Endothelial cell of umbilical vein (primary cell): ENCODE measurements at regions of chr1 and their contacts with region 1.

Region 1: GRCh38 chr1:155017041-155017945 is 14.7 kb downstream of the ZBTB7B start:
- DNase-seq: peak; percentile 95
- H3K4me3 ChIP-seq: peak overlapping the region in 1 of 3 experiments; percentile 39
- H3K27ac ChIP-seq: peak overlapping the region; percentile 36
- H3K4me1 ChIP-seq: peaks cover 9% of the 10 kb centered on the region
- H3K27me3 ChIP-seq: no peaks in the 10 kb centered on the region
- CTCF ChIP-seq: peak; percentile 100
- POLR2A ChIP-seq: peak; percentile 57

Region 2: DNA sequence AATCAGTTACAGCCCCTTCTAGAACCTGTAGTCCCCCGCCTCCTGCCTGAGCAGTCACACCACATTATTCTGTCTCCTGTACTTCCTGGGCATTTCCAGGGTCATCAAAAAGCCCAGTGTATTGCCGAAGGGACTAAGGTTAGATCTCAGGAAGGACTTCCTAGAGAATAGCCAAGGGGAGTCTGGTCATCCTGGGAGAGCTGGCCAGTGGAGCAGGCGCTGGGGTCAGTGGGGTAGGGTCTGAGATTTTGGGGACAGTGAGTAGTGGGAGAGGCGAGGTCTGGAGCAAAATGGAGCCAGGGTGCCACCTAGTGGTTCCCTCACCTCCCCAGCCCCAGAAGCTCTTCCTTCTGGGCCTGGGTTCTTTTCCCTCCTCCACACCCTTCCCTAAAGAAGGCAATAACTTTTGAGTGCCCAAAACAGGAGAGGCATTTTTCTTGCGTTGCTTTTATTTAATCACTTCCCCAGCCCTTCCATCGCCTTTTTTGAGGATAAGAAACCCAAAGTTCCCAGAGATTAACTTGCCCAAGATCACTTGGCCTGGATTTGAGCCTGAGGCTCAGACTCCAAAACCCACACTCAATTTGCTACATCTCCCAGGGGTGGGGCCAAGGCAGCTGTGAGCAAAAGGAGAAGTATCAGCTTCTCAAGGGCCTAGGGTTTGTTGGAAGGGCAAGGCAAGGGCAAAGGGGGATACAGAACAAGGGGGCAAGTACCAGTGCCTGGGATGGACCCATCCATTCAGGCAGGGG is 73.5 kb before region 1 on chr1:
- CTCF ChIA-PET with region 1: interaction called, 19 read pairs
- POLR2A ChIA-PET with region 1: no interaction called
- dilution Hi-C with region 1: no loop called
- intact Hi-C with region 1: no loop called
- DNase-seq: peak; percentile 29
- H3K4me3 ChIP-seq: no peak overlapping the region
- H3K27ac ChIP-seq: no peak overlapping the region
- H3K4me1 ChIP-seq: no peaks in the 10 kb centered on the region
- H3K27me3 ChIP-seq: no peaks in the 10 kb centered on the region
- CTCF ChIP-seq: peak; percentile 69 to 85
- POLR2A ChIP-seq: no peak

Region 3: GRCh38 chr1:154961497-154962262 is 55.6 kb before region 1 on chr1 and contains the start of gene PYGO2:
- CTCF ChIA-PET with region 1: interaction called, 37 read pairs
- POLR2A ChIA-PET with region 1: no interaction called
- dilution Hi-C with region 1: no loop called
- intact Hi-C with region 1: loop called (anchors 1 kb)
- DNase-seq: peak; percentile 81
- H3K4me3 ChIP-seq: peak within 1 kb of the TSS; percentile 71 to 78 (median 74)
- H3K27ac ChIP-seq: peak within 1 kb of the TSS; percentile 82
- H3K4me1 ChIP-seq: peaks cover 28% of the 10 kb centered on the region
- H3K27me3 ChIP-seq: no peaks in the 10 kb centered on the region
- CTCF ChIP-seq: peak; percentile 35 to 65
- POLR2A ChIP-seq: peak; percentile 84
- total RNA-seq, gene PYGO2: 21.5 and 21.9 TPM in 2 replicates

Region 4: GRCh38 chr1:154992721-154993571 is 24.3 kb before region 1 on chr1:
- CTCF ChIA-PET with region 1: interaction called, 65 read pairs
- POLR2A ChIA-PET with region 1: interaction called, 3 read pairs
- dilution Hi-C with region 1: no loop called
- intact Hi-C with region 1: no loop called
- DNase-seq: no peak
- H3K4me3 ChIP-seq: no peak overlapping the region
- H3K27ac ChIP-seq: no peak overlapping the region
- H3K4me1 ChIP-seq: peaks cover 2% of the 10 kb centered on the region
- H3K27me3 ChIP-seq: no peaks in the 10 kb centered on the region
- CTCF ChIP-seq: peak in 1 of 2 donors; percentile 40
- POLR2A ChIP-seq: no peak

Region 5: DNA sequence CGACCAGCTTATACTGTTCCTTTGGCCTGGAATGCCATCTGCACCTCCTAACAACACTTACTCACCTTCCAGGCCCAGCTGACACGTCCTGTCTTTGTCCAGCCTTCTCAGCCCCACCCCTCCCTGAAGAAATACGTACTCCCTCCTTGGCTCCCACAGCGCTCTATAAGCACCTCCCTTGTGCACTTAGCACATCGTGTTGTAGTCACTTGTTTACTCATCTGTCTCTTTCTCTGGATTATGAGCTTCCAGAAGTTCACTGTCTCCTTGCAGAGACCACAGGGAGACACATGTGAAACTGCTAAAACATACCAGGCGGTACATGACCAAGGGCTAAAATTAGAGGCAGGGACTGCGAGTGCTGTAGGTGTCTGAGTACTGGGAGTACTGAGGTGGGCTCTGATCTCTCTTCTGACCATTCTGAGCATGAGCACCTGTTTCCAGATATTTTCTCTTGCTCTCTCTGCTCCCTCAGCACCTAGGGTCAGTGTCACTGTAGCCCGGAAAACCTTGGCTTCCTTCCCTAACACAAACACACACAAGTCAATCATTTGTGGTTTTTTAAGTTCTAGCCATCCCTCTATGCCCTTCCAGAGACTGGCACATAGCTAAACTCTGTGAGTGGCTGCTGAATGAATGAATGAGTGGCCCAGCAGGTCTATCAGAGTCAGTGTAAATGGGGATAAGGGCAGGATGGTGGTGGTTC is 21.5 kb after region 1 on chr1:
- CTCF ChIA-PET with region 1: interaction called, 38 read pairs
- POLR2A ChIA-PET with region 1: no interaction called
- dilution Hi-C with region 1: no loop called
- intact Hi-C with region 1: no loop called
- DNase-seq: no peak
- H3K4me3 ChIP-seq: no peak overlapping the region
- H3K27ac ChIP-seq: no peak overlapping the region
- H3K4me1 ChIP-seq: peaks cover 4% of the 10 kb centered on the region
- H3K27me3 ChIP-seq: peaks cover 0 to 5% of the 10 kb centered on the region in 2 experiments
- CTCF ChIP-seq: no peak
- POLR2A ChIP-seq: no peak

Region 6: DNA sequence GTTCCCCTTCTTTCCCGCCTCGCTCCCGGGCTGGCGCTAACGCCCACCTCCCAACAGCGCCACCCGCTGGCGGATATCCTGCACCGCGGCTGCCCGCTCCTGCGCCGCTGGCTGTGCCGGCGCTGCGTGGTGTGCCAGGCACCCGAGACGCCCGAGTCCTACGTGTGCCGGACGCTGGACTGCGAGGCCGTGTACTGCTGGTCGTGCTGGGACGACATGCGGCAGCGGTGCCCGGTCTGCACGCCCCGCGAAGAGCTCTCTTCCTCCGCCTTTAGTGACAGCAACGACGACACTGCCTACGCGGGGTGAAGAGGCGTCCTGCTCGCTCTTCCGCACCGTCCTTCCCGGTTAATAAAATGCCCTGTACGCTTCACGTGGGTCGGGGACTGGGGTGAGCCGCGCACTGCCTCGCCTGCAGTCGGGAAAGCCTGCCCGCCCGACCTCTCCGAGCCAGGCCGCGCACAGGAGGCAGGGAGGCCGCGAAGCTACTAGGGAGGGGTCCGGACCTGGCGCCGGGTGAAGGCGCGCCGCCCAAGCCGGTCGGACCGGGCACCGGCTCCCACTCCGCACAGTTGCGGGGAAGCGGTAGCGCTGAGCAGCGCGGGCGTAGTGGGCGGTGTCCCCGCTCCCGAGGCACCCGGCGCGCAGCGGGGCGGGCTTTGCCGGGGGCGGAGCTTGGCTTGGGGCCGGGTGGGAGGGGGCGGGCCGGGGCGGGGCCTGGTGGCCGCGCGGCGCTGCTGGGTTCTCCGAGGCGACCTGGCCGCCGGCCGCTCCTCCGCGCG is 33.5 kb after region 1 on chr1 and contains the start of gene ADAM15:
- CTCF ChIA-PET with region 1: interaction called, 38 read pairs
- POLR2A ChIA-PET with region 1: no interaction called
- dilution Hi-C with region 1: no loop called
- intact Hi-C with region 1: loop called (anchors 1 kb)
- DNase-seq: peak; percentile 81
- H3K4me3 ChIP-seq: peak within 1 kb of the TSS; percentile 66 to 75 (median 74)
- H3K27ac ChIP-seq: peak within 1 kb of the TSS; percentile 53
- H3K4me1 ChIP-seq: peaks cover 24% of the 10 kb centered on the region
- H3K27me3 ChIP-seq: no peaks in the 10 kb centered on the region
- CTCF ChIP-seq: peak; percentile 94 to 99
- POLR2A ChIP-seq: no peak
- total RNA-seq, gene ADAM15: 268 and 299 TPM in 2 replicates